ENCODE measurements at regions of chr20 and their contacts with region 1.

Region 1: DNA sequence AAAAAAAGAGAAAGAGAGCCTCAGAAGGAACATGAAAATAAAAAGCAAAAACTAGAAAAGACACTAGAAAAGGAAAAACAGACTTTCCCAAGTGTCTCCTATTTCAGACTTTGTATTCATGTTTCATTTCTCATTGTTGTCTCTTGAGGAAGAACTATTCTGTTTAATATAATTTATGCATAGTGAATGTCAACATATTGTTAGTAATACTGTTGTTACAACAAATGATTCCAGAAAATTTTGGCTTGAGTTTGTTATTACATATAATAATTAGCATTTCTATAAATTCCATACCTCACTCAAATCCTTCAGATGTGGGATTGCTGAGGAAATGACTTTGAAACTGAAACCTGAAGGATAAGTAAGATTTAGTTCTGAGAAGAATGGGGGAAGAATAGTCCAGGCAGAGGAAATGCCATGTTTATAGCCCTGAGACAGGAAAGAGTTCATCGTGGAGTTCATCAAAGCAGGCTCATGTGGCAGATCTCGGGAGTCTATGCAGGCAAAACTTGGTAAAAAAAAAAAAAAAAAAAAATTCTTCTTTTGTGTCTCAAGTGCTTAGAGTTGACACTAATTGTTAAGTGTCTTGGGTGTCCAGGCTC is 53.1 kb upstream of the EIF2S2 start:
- DNase-seq: no peak
- ATAC-seq: no peak
- H3K4me3 ChIP-seq: no peak overlapping the region
- H3K27ac ChIP-seq: no peak overlapping the region
- H3K4me1 ChIP-seq: peaks cover 0 to 5% (median 0%) of the 10 kb centered on the region in 9 donors
- H3K27me3 ChIP-seq: no peaks in the 10 kb centered on the region
- CTCF ChIP-seq: no peak

Region 2: GRCh38 chr20:34145280-34145819 is 19.8 kb before region 1 on chr20:
- intact Hi-C with region 1: loop called in 1 of 10 experiments (anchors 1 kb)
- DNase-seq: no peak
- ATAC-seq: no peak
- H3K4me3 ChIP-seq: no peak overlapping the region
- H3K27ac ChIP-seq: no peak overlapping the region
- H3K4me1 ChIP-seq: no peaks in the 10 kb centered on the region
- H3K27me3 ChIP-seq: no peaks in the 10 kb centered on the region
- CTCF ChIP-seq: no peak

Region 3: DNA sequence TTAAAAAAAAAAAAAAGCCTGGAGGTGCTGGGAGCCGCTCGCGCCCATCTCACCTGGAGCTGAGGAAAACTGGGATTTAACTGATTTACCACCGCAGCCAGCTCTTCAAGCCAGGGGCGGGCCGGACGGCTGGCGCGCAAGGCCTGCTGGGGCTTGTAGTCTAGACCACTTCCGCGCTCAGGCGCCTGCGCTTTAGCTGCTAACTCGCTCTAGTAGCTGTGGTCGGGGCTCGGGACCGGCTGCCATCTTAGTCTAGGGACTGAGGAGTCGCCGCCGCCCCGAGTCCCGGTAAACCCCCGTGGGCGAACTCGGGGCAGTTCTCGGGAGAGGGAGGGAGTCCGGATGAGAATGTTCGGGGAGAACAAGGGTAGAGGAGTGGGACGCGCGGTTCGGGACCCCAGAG is 197.9 kb after region 1 on chr20 and contains the start of gene ITCH:
- intact Hi-C with region 1: no loop called
- DNase-seq: peak; percentile 95 to 96
- ATAC-seq: peak; percentile 99 to 100 (median 100)
- H3K4me3 ChIP-seq: peak within 1 kb of the TSS; percentile 59 to 97 (median 90)
- H3K27ac ChIP-seq: peak within 1 kb of the TSS; percentile 84 to 98 (median 96)
- H3K4me1 ChIP-seq: peaks cover 3 to 48% (median 40%) of the 10 kb centered on the region in 9 donors
- H3K27me3 ChIP-seq: no peaks in the 10 kb centered on the region
- CTCF ChIP-seq: no peak
- total RNA-seq, gene ITCH: 34.1 to 47.5 (median 39.6) TPM

Measured in heart right ventricle (tissue), 16 donors.